CD14-positive monocyte (primary cell): ENCODE measurements at regions of chr18 and their contacts with region 1.

Region 1: GRCh38 chr18:5515011-5515784 is 28.6 kb downstream of the EPB41L3 start:
- DNase-seq: peak; percentile 72 to 86 (median 83)
- H3K4me3 ChIP-seq: peak overlapping the region; percentile 20 to 64 (median 55)
- H3K4me3 Mint-ChIP-seq: peak overlapping the region; percentile 62 to 84
- H3K27ac ChIP-seq: peak overlapping the region; percentile 83 to 94
- H3K27ac Mint-ChIP-seq: peak overlapping the region; percentile 90 to 98 (median 96)
- H3K4me1 ChIP-seq: peaks cover 50 to 66% of the 10 kb centered on the region in 2 donors
- H3K4me1 Mint-ChIP-seq: peaks cover 69% of the 10 kb centered on the region
- H3K27me3 ChIP-seq: no peaks in the 10 kb centered on the region
- H3K27me3 Mint-ChIP-seq: no peaks in the 10 kb centered on the region
- CTCF ChIP-seq: no peak

Region 2: GRCh38 chr18:5463379-5463778 is 51.8 kb before region 1 on chr18:
- intact Hi-C with region 1: loop called (anchors 10 kb)
- DNase-seq: peak; percentile 75 to 93 (median 86)
- H3K4me3 ChIP-seq: peak overlapping the region in 2 of 3 experiments; percentile 10 to 51
- H3K4me3 Mint-ChIP-seq: peak overlapping the region; percentile 31 to 49
- H3K27ac ChIP-seq: peak overlapping the region; percentile 80 to 96
- H3K27ac Mint-ChIP-seq: peak overlapping the region; percentile 91 to 96 (median 95)
- H3K4me1 ChIP-seq: peaks cover 68 to 71% of the 10 kb centered on the region in 2 donors
- H3K4me1 Mint-ChIP-seq: peaks cover 66% of the 10 kb centered on the region
- H3K27me3 ChIP-seq: no peaks in the 10 kb centered on the region
- H3K27me3 Mint-ChIP-seq: peaks cover 0 to 5% (median 4%) of the 10 kb centered on the region in 3 donors
- CTCF ChIP-seq: no peak

Region 3: GRCh38 chr18:5527603-5528002 is 12.4 kb after region 1 on chr18:
- intact Hi-C with region 1: no loop called
- DNase-seq: peak; percentile 30 to 63 (median 59)
- H3K4me3 ChIP-seq: peak overlapping the region in 1 of 3 experiments; percentile 9
- H3K4me3 Mint-ChIP-seq: peak overlapping the region; percentile 8 to 17
- H3K27ac ChIP-seq: peak overlapping the region in 1 of 2 donors; percentile 16
- H3K27ac Mint-ChIP-seq: peak overlapping the region in 5 of 7 donors; percentile 3 to 80 (median 15)
- H3K4me1 ChIP-seq: peaks cover 20 to 29% of the 10 kb centered on the region in 2 donors
- H3K4me1 Mint-ChIP-seq: peaks cover 32% of the 10 kb centered on the region
- H3K27me3 ChIP-seq: no peaks in the 10 kb centered on the region
- H3K27me3 Mint-ChIP-seq: peaks cover 0 to 2% (median 1%) of the 10 kb centered on the region in 3 donors
- CTCF ChIP-seq: no peak